ENCODE measurements at regions of chr1 and their contacts with region 1.

Region 1: DNA sequence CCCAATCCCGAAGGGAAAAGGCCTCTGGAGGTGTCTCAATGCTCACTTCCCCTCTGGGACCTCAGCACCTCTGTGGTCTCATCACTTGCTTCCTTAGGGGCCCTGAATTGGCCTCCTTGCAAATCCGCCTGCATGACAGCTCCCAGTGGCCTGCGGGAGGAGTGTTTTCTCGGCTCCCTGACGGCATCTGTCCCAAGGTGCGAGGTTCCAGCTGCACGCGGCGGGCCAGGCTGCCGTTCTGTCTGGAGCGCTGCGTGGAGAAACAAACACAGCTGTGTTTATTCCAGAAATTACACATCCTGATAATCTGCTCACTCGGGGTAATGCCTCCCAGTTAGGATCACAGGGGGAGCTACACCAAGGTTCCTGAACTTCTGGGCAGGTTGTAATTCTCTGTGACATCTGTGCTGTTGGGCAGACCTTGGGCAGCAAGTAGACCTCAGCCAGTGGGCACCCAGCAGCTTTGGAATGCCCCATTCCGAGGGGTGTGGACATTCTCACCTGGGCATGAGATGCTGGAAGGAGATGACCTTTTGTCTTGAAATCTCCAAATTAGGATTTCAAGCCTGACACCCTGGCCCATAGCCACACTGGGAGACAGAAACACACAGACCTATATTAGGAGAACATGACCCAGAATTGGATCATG is 18.2 kb downstream of the EPHB2 start:
- DNase-seq: no peak
- H3K4me3 ChIP-seq: no peak overlapping the region
- H3K27ac ChIP-seq: no peak overlapping the region
- H3K4me1 ChIP-seq: no peaks in the 10 kb centered on the region
- H3K27me3 ChIP-seq: no peaks in the 10 kb centered on the region
- CTCF ChIP-seq: no peak
- POLR2A ChIP-seq: no peak

Region 2: DNA sequence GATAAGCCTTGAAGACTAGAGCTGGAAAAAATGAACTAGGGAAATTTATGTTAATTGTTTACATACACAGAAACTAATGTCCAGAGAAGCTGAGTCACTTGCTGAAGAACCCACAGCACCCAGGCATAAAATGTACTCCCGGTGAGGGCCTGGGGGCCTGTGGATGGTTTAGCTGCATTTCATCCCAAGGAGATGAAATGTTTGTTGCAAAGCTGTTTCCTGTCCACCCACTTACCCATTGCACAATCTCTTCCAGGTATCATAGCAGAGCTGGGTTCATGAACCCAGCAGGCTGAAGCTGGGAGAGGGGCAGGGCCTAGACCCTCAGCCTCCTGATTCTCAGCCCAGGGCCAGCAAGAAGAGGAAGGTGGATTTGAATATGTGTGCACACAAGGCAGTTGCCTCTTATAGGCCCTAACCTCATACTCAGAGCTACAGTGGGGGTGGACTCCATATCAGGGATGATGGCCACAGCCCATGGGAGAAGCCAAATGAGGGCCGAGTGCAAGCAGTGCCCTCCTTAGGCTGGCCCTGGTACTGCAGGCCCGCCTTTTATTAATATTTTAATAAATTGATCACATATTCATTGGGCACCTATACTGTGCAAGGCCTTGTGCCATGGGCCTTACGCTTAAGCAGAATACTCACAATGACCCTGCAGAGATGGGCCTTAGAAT is 133.0 kb after region 1 on chr1:
- intact Hi-C with region 1: loop called (anchors 10 kb)
- DNase-seq: peak; percentile 62
- H3K4me3 ChIP-seq: no peak overlapping the region
- H3K27ac ChIP-seq: no peak overlapping the region
- H3K4me1 ChIP-seq: no peaks in the 10 kb centered on the region
- H3K27me3 ChIP-seq: no peaks in the 10 kb centered on the region
- CTCF ChIP-seq: peak; percentile 66 to 87 (median 78)
- POLR2A ChIP-seq: no peak

Region 3: DNA sequence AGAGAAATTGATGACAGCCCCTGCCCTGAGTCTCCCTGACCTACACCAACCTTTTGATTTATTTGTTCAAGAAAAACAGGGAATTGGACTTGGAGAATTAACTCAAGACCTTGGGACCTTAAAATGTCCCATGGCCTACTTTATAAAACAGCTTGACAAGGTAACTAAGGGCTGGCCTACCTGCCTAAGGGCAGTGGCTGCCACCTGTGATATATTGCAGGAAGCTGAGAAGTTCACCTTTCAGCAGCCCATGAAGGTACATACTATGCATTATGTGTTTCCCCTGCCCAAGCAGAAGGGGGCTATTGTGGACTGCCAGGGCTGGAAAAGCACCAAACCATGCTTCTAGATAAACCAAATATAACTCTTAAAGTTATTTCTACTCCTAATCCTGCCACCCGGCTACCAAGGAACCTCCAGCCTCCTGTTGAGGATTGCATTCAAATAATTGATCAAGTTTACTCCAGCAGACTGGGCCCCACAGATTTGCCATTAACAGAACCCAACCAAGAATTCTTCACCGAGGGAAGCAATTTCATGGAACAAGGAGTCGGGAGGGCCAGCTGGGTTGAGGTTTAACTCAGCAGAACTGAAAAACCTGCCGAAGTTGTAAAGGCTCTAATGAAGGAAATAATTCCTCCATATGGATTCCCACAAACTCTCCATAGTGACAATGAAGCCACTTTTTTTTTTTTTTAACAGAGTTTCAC is 215.6 kb after region 1 on chr1:
- intact Hi-C with region 1: no loop called
- DNase-seq: no peak
- H3K4me3 ChIP-seq: no peak overlapping the region
- H3K27ac ChIP-seq: no peak overlapping the region
- H3K4me1 ChIP-seq: no peaks in the 10 kb centered on the region
- H3K27me3 ChIP-seq: no peaks in the 10 kb centered on the region
- CTCF ChIP-seq: no peak
- POLR2A ChIP-seq: no peak